Calu3 (cell line): ENCODE measurements at regions of chr17 and their contacts with region 1.

Region 1: DNA sequence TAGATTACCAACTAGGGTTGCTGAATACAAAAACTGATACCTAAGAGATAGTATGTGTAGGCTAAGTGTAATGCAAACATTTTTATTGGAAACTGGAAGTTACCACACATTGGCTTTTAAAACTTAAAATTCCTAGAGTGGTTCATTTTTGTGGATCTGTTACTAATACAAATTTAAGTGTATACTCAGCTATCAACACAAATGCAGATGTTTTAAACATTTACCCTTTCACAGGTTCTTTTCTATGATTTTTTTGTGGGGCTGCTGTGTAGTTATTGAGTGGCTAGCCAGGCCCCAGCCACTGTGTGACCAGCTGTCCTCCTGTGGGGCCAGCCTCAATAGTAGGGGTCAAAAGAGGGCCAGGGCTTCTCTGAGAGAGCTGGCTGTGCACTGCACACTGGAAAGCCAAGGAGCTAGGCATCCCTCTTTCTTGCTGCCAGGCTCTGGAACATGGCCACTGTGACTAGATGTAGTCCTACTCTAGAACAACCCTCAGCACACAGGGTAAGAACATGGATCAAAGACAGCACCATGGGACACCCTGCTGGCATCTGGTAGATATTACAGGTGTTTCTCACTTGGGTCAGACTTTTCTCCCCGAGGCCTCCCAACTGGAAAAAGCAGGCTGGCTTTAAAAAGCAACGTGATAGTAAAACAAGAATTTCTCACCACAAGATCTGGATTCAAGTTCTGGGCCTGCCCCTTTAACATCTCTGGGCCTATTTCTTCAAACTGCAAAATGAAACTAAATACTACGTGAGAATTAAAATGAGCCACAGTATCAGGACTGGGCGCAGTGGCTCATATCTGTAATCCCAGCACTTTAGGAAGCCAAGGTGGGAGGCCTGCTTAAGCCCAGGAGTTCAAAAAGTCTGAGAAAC is 7.3 kb upstream of the VEZF1 start:
- DNase-seq: peak; percentile 55
- H3K4me3 Mint-ChIP-seq: no peak overlapping the region
- H3K27ac Mint-ChIP-seq: no peak overlapping the region
- H3K4me1 Mint-ChIP-seq: no peaks in the 10 kb centered on the region
- H3K27me3 Mint-ChIP-seq: no peaks in the 10 kb centered on the region
- CTCF ChIP-seq: peak; percentile 47

Region 2: GRCh38 chr17:57849874-57850754 is 145.2 kb before region 1 on chr17 and contains the start of gene MRPS23:
- CTCF ChIA-PET with region 1: interaction called, 10 read pairs
- intact Hi-C with region 1: no loop called
- DNase-seq: peak; percentile 90
- H3K4me3 Mint-ChIP-seq: peak within 1 kb of the TSS; percentile 91
- H3K27ac Mint-ChIP-seq: peak within 1 kb of the TSS; percentile 91
- H3K4me1 Mint-ChIP-seq: peaks cover 11% of the 10 kb centered on the region
- H3K27me3 Mint-ChIP-seq: no peaks in the 10 kb centered on the region
- CTCF ChIP-seq: no peak
- total RNA-seq, gene MRPS23: 38.1 and 49.0 TPM in 2 replicates

Region 3: GRCh38 chr17:57861000-57861789 is 134.1 kb before region 1 on chr17:
- CTCF ChIA-PET with region 1: interaction called, 17 read pairs
- intact Hi-C with region 1: loop called (anchors 2 kb)
- DNase-seq: peak; percentile 53
- H3K4me3 Mint-ChIP-seq: peak overlapping the region; percentile 73
- H3K27ac Mint-ChIP-seq: peak overlapping the region; percentile 71
- H3K4me1 Mint-ChIP-seq: no peaks in the 10 kb centered on the region
- H3K27me3 Mint-ChIP-seq: no peaks in the 10 kb centered on the region
- CTCF ChIP-seq: no peak